ENCODE measurements at regions of chr11 and their contacts with region 1.

Region 1: GRCh38 chr11:124837491-124837856 is 27.8 kb upstream of the ROBO3 start:
- DNase-seq: peak; percentile 33
- H3K4me3 ChIP-seq: no peak overlapping the region
- H3K27ac ChIP-seq: no peak overlapping the region
- H3K4me1 ChIP-seq: peaks cover 14% of the 10 kb centered on the region
- H3K27me3 ChIP-seq: no peaks in the 10 kb centered on the region
- CTCF ChIP-seq: peak in 1 of 3 experiments; percentile 40
- POLR2A ChIP-seq: no peak

Region 2: DNA sequence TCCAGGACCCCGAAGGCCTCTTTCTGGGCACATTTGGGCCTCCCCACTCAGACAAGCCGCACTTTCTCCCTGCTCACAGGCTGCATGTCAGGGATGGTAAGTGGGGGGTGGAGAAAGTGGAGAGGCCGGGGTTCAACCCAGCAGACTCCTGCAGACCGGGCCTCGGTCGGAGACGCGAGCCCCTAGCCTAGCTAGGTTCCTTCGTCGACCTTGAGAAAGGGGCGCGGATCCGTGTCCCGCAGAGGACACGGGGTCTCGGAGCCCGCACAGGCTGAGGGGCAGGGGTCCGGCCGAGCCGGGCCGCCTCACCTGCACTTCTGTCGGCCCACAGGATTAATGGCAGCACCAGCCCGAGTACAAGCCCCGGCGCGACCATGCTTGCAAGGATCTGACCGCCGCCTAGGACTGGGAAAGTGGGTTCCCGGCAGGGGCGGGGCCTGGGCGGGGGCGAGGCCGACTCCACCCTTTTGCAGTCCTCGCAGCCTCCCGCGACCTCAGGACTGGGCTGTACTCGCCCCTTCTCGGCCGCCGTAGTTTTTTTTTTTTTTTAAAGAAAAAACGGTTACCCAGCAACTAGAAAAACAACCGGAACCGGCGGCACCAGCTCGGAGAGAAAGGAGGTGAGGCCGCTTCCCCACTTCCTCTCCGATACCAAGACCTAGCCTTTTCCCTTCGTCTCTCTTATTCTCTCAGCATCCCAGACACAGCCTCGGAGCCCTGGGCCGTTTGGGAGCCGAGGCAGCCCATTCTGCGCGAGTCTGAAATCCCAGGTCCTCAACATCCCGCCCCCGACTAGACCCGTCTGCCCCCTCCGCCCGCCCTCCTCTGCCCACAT is 163.9 kb before region 1 on chr11 and contains the starts of genes SIAE and SPA17:
- intact Hi-C with region 1: loop called (anchors 5 kb)
- DNase-seq: peak; percentile 96
- H3K4me3 ChIP-seq: peak within 1 kb of the TSS; percentile 52 to 72
- H3K27ac ChIP-seq: peak within 1 kb of the TSS; percentile 55 to 61
- H3K4me1 ChIP-seq: no peaks in the 10 kb centered on the region
- H3K27me3 ChIP-seq: no peaks in the 10 kb centered on the region
- CTCF ChIP-seq: no peak
- POLR2A ChIP-seq: no peak
- total RNA-seq, gene SIAE: 14.5 to 16.1 TPM
- total RNA-seq, gene SPA17: 97.5 to 170 TPM

Region 3: DNA sequence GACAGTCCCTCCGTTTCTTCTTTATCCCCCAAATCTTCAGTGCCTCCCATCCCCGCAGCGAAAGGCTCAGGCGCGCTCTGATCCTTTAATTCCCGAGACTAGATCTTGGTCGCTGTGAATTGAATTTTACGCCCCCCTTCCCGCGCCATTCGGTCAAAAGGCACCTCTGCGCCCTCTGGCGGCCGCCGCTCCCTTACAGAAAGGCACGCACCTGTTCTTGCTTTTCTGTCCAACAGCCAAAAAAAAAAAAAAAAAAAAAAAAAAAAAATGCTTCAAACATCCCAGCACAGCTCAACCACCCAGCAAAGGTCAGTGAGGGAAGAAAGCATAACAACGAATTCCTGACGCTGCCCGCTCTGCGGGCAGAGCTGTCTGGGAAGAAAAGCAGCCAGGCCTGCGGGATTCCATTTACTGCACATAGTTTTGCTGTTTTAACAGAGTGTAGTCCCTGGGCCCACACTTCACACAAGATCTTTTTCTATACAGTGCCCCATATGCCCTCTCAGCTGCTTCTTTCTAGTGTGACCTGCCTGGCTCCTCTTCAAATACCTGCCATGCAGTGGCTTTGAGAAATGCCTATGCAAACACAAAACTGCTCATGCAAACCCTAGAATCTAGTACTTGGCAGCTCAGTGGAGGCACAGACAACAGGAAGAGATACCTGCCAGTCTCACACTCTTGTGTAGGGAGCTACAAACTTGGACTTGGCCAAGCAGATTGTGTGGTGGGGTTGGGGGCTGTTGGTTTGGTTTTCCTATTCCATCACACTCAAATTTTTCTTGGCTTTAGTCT is 74.1 kb before region 1 on chr11:
- intact Hi-C with region 1: loop called (anchors 10 kb)
- DNase-seq: peak; percentile 88
- H3K4me3 ChIP-seq: peak overlapping the region; percentile 43 to 47
- H3K27ac ChIP-seq: no peak overlapping the region
- H3K4me1 ChIP-seq: peaks cover 18% of the 10 kb centered on the region
- H3K27me3 ChIP-seq: no peaks in the 10 kb centered on the region
- CTCF ChIP-seq: peak; percentile 47 to 64 (median 53)
- POLR2A ChIP-seq: no peak

Region 4: DNA sequence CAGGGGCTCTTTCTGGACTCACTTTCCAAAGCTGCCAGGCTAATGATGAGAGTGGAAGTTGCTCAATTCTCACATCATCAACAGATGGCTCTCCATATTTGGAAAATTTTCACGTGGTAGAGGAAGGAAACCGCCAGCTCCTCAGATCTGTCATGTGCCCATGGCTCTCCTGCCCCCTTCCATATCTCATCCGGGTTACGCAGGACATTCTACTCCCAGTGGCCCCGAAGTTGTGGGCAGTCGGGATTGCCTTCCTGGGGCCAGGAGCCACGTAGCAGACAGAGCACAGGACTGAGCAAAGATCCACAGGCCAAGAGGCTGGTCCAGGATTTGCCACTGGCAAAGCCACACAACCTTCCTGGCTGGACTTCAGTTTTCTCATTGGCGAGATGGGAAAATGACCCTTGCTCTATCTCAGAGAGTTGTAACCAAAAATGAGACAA is 1335.1 kb after region 1 on chr11:
- intact Hi-C with region 1: no loop called
- DNase-seq: no peak
- H3K4me3 ChIP-seq: no peak overlapping the region
- H3K27ac ChIP-seq: no peak overlapping the region
- H3K4me1 ChIP-seq: no peaks in the 10 kb centered on the region
- H3K27me3 ChIP-seq: no peaks in the 10 kb centered on the region
- CTCF ChIP-seq: no peak
- POLR2A ChIP-seq: no peak

Measured in testis (tissue), 5 donors.